Common myeloid progenitor, CD34-positive (primary cell): ENCODE measurements at regions of chr19 and their contacts with region 1.

Region 1: DNA sequence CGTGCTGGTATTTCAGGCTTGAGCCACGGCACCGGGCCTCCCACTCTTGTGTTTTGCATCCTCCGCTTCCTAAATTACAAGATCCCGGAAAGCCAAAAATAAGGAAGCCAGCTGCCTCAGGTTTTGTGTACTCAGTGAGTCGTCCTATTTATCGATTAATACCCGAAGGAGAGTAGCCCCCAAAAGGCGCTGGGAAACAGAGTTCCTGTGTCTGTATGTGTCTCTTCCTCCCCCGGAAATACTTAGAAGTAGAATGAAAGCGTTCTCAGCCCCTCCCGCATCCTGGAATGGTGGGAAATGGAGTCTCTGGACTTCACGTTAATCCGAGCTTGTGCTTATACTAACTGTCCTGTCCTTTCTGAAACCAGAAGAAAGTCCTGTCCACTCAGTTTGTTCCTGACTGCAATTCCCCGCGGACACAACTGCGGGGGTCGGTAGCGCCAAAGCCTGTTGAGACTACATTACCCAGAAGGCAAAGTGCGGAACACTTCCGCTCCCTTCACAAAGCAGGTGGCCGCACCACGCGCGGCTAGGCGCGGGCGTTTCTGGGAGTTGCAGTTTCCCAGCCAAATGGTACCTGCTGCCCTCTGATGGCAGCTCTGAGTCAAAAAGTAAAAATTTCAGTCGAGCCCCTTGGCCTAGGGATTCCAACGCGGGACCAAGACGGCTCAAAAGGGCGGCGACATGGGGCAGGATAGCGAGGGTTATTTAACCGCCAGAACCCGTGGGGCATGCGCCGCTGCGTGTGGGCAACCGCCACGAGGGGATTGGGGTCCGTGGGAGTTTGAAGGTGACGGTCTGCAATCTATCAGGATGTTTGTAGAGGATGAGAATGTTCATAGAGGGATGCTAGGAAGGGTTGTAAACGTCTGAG is 2.2 kb upstream of the GSK3A start:
- DNase-seq: peak; percentile 96 to 97 (median 97)
- H3K4me3 ChIP-seq: peak overlapping the region; percentile 53 to 98 (median 88)
- H3K27ac ChIP-seq: peak overlapping the region; percentile 47 to 79
- H3K4me1 ChIP-seq: peaks cover 7 to 37% (median 30%) of the 10 kb centered on the region in 4 experiments
- H3K27me3 ChIP-seq: no peaks in the 10 kb centered on the region

Region 2: GRCh38 chr19:42226886-42227285 is 17.7 kb before region 1 on chr19:
- CTCF ChIA-PET with region 1: interaction called, 11 read pairs
- POLR2A ChIA-PET with region 1: interaction called, 3 read pairs
- DNase-seq: no peak
- H3K4me3 ChIP-seq: no peak overlapping the region
- H3K27ac ChIP-seq: no peak overlapping the region
- H3K4me1 ChIP-seq: peaks cover 0 to 6% (median 2%) of the 10 kb centered on the region in 4 experiments
- H3K27me3 ChIP-seq: no peaks in the 10 kb centered on the region

Region 3: GRCh38 chr19:42268704-42269477 is 24.3 kb after region 1 on chr19 and contains the start of gene CIC:
- CTCF ChIA-PET with region 1: interaction called, 12 read pairs
- POLR2A ChIA-PET with region 1: interaction called, 5 read pairs
- DNase-seq: peak; percentile 100
- H3K4me3 ChIP-seq: peak within 1 kb of the TSS; percentile 74 to 93 (median 81)
- H3K27ac ChIP-seq: peak within 1 kb of the TSS; percentile 99
- H3K4me1 ChIP-seq: peaks cover 7 to 37% (median 33%) of the 10 kb centered on the region in 4 experiments
- H3K27me3 ChIP-seq: no peaks in the 10 kb centered on the region

Region 4: DNA sequence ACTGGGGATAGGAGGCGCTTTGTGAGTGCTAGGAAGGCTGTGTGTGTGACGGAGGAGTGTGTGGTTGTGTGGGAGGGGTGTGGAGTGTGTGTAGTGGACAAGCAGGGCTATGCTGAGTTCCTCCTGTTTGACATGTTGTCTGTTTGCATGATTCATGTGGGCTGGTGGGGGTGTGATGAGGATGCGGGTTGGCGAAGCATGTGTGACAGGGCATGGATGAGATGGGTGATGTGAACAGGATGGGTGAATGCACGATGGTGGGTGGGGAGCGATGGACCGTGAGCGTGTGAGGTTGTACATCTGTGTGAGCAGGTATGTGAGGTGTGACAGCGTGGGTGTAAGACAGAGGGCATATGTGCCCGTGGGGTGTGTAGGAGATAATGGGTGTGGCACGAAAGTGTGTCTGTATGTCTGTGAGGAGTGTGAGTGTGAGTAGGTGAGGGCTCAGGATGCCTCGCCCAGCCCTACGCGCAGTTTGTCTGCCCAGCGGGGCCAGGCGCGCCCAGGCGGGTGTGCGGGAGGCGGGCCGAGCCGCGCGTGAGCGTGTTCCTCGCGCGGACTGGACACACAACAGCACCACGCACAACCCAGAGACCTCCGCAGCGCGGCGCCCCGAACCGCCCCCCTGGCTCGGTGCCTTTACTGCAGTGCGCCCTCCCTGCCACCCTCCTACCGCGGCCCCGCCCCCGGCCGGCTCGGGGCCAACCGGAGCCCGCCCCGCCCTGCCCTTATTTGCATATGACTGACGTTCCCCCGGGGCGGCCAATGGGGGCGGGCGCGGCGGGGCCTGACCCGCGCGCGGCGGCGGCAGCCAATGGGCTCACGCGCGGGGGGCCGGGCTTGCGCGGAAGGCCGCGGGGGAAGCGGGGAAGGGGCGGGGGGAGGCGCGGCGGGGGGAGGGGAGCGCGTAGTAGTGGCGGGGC is 38.8 kb after region 1 on chr19:
- CTCF ChIA-PET with region 1: interaction called, 159 read pairs
- POLR2A ChIA-PET with region 1: interaction called, 21 read pairs
- DNase-seq: peak; percentile 93 to 97 (median 96)
- H3K4me3 ChIP-seq: peak overlapping the region in 6 of 7 experiments; percentile 2 to 91 (median 64)
- H3K27ac ChIP-seq: peak overlapping the region; percentile 4 to 73
- H3K4me1 ChIP-seq: peaks cover 9 to 73% (median 63%) of the 10 kb centered on the region in 4 experiments
- H3K27me3 ChIP-seq: no peaks in the 10 kb centered on the region

Region 5: DNA sequence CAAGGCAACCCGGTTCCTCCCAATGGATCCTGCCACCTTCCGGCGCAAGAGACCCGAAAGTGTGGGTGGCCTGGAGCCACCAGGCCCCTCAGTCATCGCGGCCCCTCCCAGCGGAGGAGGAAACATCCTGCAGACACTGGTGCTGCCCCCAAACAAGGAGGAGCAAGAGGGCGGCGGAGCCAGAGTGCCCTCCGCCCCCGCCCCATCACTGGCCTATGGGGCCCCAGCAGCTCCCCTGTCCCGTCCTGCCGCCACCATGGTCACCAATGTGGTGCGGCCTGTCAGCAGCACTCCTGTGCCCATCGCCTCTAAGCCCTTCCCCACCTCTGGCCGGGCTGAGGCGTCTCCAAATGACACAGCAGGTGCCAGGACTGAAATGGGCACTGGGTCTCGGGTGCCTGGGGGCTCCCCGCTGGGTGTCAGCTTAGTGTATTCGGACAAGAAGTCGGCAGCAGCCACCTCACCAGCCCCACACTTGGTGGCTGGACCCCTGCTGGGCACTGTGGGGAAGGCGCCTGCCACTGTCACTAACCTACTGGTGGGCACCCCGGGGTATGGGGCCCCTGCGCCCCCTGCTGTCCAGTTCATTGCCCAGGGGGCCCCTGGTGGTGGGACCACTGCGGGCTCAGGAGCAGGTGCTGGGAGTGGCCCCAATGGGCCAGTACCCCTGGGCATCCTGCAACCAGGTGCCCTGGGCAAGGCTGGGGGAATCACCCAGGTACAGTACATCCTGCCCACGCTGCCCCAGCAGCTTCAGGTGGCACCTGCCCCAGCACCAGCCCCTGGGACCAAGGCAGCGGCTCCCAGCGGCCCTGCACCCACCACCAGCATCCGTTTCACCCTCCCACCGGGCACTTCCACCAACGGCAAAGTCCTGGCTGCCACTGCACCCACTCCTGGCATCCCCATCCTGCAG is 46.2 kb after region 1 on chr19:
- CTCF ChIA-PET with region 1: interaction called, 12 read pairs
- POLR2A ChIA-PET with region 1: interaction called, 3 read pairs
- DNase-seq: peak; percentile 82 to 87 (median 85)
- H3K4me3 ChIP-seq: no peak overlapping the region
- H3K27ac ChIP-seq: no peak overlapping the region
- H3K4me1 ChIP-seq: peaks cover 0 to 12% (median 11%) of the 10 kb centered on the region in 4 experiments
- H3K27me3 ChIP-seq: no peaks in the 10 kb centered on the region